Endothelial cell of umbilical vein (primary cell): ENCODE measurements at regions of chrX and their contacts with region 1.

Region 1: GRCh38 chrX:54639346-54640102 is 109.5 kb downstream of the GNL3L start:
- DNase-seq: peak; percentile 97
- H3K4me3 ChIP-seq: peak overlapping the region; percentile 35 to 73 (median 40)
- H3K27ac ChIP-seq: peak overlapping the region; percentile 98
- H3K4me1 ChIP-seq: peaks cover 6% of the 10 kb centered on the region
- H3K27me3 ChIP-seq: no peaks in the 10 kb centered on the region
- CTCF ChIP-seq: peak; percentile 61 to 79
- POLR2A ChIP-seq: peak; percentile 46

Region 2: GRCh38 chrX:54357414-54358377 is 281.8 kb before region 1 on chrX and contains the start of gene WNK3:
- CTCF ChIA-PET with region 1: no interaction called
- POLR2A ChIA-PET with region 1: no interaction called
- dilution Hi-C with region 1: no loop called
- intact Hi-C with region 1: loop called (anchors 2 kb)
- DNase-seq: peak; percentile 69
- H3K4me3 ChIP-seq: peak within 1 kb of the TSS; percentile 18 to 56 (median 44)
- H3K27ac ChIP-seq: no peak within 1 kb of the TSS
- H3K4me1 ChIP-seq: no peaks in the 10 kb centered on the region
- H3K27me3 ChIP-seq: peaks cover 3 to 6% of the 10 kb centered on the region in 2 experiments
- CTCF ChIP-seq: no peak
- POLR2A ChIP-seq: no peak
- total RNA-seq, gene WNK3: 2.6 and 2.7 TPM in 2 replicates

Region 3: DNA sequence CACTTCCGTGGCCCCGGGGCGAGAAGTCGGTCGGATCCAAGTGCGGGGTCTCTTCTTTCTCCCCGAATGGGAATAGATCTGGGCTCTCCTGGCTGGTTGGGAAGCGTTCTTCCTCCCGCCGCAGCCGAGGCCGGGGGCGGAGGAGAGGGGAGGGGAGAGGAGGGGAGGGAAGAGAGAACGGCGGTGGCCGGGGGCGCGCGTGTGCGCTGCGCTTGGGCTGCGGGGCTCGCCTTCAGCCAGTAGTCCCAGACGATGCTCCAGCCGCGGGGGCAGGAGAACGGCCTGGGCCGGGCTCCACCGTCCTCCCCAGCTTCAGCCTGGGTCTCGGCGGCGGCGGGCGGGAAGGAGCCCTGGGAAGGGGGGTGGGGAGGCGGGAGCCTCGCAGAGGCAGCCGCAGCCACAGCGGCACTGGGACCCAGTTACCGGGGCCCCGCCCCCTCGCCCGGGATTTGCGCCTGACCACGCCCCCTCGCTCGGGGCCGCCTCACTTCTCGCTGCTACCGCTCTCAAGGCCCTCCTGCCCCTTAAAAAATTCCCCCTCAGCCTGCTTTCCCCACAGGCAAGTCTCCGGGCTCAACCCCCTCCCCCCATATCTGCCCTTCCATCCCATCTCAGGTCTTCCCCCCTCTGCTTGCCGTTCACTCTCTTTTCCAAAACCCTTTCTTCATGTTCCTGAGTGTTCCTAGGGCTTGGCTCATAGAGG is 143.6 kb before region 1 on chrX and contains the start of gene FGD1:
- CTCF ChIA-PET with region 1: no interaction called
- POLR2A ChIA-PET with region 1: no interaction called
- dilution Hi-C with region 1: no loop called
- intact Hi-C with region 1: loop called (anchors 2 kb)
- DNase-seq: peak; percentile 60
- H3K4me3 ChIP-seq: peak within 1 kb of the TSS; percentile 8 to 75 (median 52)
- H3K27ac ChIP-seq: peak within 1 kb of the TSS; percentile 11
- H3K4me1 ChIP-seq: peaks cover 23% of the 10 kb centered on the region
- H3K27me3 ChIP-seq: no peaks in the 10 kb centered on the region
- CTCF ChIP-seq: no peak
- POLR2A ChIP-seq: no peak
- total RNA-seq, gene FGD1: 18.0 and 19.6 TPM in 2 replicates

Region 4: DNA sequence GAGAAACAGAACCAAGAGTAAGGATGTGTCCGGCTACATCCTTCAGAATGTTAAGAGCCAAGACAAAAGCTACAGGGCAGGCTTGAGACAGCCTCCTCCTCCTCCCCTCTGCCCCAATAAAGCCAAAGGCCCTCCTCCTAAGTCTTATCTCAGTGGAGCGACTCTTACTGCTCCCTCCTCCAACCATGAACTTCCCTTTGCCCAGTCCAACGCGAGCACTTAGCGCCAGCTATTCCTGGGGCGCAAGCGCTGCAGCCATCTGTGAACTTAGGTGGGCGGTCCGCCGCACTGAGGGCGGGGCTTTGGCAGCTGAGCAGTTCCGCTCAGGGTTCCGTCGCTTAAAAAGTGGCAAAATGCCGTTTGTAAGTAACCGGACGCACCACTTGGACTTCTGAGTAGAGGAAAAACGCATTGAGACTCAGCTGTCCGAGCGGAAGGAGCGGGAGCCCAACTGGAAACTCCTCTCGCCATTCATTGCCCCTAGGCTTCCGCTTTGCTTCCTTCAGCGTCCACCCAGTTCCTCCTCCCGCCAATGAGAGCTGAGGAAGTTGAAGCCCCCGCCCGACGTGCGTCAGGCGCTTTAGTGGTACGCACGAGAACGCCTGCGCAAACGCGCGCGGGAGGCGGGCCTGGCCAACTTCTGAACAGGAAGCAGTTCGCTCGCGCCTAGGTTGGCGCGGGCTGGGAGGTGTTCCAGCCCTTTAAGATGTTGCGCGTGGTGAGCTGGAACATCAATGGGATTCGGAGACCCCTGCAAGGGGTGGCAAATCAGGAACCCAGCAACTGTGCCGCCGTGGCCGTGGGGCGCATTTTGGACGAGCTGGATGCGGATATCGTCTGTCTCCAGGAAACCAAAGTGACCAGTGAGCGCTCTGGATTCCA is 360.4 kb after region 1 on chrX and contains the start of gene APEX2:
- CTCF ChIA-PET with region 1: interaction called, 3 read pairs
- POLR2A ChIA-PET with region 1: interaction called, 15 read pairs
- dilution Hi-C with region 1: no loop called
- intact Hi-C with region 1: loop called (anchors 2 kb)
- DNase-seq: peak; percentile 92
- H3K4me3 ChIP-seq: peak within 1 kb of the TSS; percentile 57 to 93 (median 74)
- H3K27ac ChIP-seq: peak within 1 kb of the TSS; percentile 90
- H3K4me1 ChIP-seq: peaks cover 26% of the 10 kb centered on the region
- H3K27me3 ChIP-seq: no peaks in the 10 kb centered on the region
- CTCF ChIP-seq: no peak
- POLR2A ChIP-seq: peak; percentile 72
- total RNA-seq, gene APEX2: 22.7 and 26.6 TPM in 2 replicates

Region 5: GRCh38 chrX:55160685-55161552 is 521.4 kb after region 1 on chrX:
- CTCF ChIA-PET with region 1: no interaction called
- POLR2A ChIA-PET with region 1: no interaction called
- dilution Hi-C with region 1: no loop called
- intact Hi-C with region 1: loop called (anchors 1 kb)
- DNase-seq: peak; percentile 91
- H3K4me3 ChIP-seq: peak overlapping the region; percentile 62 to 83 (median 65)
- H3K27ac ChIP-seq: peak overlapping the region; percentile 74
- H3K4me1 ChIP-seq: peaks cover 5% of the 10 kb centered on the region
- H3K27me3 ChIP-seq: no peaks in the 10 kb centered on the region
- CTCF ChIP-seq: peak; percentile 24 to 52
- POLR2A ChIP-seq: peak; percentile 77